Activated T-helper 1 cell treated with anti-CD3 and anti-CD28 coated beads, Interleukin-12 subunit alpha, Interleukin-12 subunit beta, Interleukin-2, Interleukin-4 antibody, amounts not matched to agents 30 ng/mL and 10 ng/mL and 1 ng/mL, durations not matched to agents 14 hours and 24 hours and 36 hours (primary cell): ENCODE measurements at regions of chr18 and their contacts with region 1.

Region 1: DNA sequence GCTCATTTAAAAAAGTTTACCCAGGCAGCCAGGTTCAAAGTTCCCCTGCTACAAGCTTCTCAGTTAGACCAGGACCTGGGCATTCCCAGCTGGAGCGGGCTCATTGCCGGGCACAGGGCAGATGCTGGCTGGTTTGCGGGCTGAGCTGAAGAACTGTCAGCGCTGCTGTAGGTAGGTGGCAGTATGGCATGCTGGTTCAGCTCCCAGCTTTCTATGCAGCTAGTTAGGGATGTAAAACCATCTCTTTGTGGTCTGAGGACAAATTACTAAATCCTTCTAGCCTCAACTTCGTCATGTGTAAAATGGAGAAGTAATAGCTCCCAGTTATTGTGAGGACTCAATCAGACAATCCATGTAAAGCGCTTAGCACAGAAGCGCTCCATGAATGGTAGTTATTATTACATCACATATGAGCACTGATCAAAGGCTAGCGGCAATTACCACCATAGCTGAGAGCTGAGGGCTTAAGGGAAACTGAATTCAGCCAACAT is 2.4 kb upstream of the LDLRAD4 start:
- DNase-seq: peak; percentile 39
- H3K4me3 Mint-ChIP-seq: peak overlapping the region; percentile 87
- H3K27ac Mint-ChIP-seq: peak overlapping the region; percentile 92
- H3K4me1 Mint-ChIP-seq: peaks cover 31% of the 10 kb centered on the region
- H3K27me3 Mint-ChIP-seq: peaks cover 32% of the 10 kb centered on the region

Region 2: DNA sequence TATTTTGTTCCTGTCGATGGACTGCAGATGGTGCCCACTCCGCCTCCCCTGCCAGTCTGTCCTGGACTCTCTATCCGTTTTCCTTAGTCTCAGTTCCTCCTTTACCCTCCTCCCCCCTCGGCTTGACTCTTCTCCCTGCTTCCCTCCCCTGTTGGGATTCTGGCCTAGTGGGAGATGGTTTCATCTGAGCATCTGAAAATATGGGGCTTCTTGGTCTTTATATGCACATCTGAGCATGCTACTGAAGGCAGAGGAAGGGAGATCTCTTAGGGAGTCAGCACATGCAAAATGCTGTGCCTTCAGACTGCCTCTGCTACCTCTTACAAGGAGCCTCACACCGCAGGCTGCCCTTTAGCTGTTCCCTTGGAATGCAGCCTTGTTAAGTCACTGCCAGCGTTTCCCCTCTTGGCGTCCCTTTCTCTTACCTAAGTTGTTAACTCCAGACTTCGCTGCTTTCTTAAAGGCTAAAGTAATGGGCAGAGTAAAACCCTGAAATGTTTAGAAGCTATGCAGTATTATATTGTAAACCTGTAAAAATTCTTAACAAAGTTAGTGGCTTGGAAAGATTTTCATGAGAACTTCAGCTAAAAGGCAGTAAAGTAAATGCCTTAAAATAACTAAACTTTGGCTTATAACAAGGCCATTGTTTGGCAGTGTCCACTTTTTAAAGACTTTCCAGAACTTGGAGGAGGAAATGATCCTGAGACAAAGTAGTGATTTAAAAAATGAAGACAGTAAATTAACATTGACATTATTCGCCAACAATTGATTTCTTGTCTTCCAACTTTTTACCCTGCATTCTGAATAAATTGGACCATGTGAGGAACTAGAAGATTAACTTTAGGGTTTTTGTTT is 52.2 kb after region 1 on chr18:
- intact Hi-C with region 1: loop called (anchors 1 kb)
- DNase-seq: no peak
- H3K4me3 Mint-ChIP-seq: peak overlapping the region; percentile 19
- H3K27ac Mint-ChIP-seq: peak overlapping the region; percentile 74
- H3K4me1 Mint-ChIP-seq: peaks cover 62% of the 10 kb centered on the region
- H3K27me3 Mint-ChIP-seq: peaks cover 7% of the 10 kb centered on the region

Region 3: GRCh38 chr18:13375302-13376255 is 159.4 kb after region 1 on chr18:
- intact Hi-C with region 1: loop called (anchors 1 kb)
- DNase-seq: peak; percentile 80
- H3K4me3 Mint-ChIP-seq: peak overlapping the region; percentile 74
- H3K27ac Mint-ChIP-seq: peak overlapping the region; percentile 95
- H3K4me1 Mint-ChIP-seq: peaks cover 78% of the 10 kb centered on the region
- H3K27me3 Mint-ChIP-seq: peaks cover 4% of the 10 kb centered on the region

Region 4: GRCh38 chr18:13455960-13456471 is 239.9 kb after region 1 on chr18:
- intact Hi-C with region 1: loop called (anchors 1 kb)
- DNase-seq: peak; percentile 35
- H3K4me3 Mint-ChIP-seq: peak overlapping the region; percentile 60
- H3K27ac Mint-ChIP-seq: peak overlapping the region; percentile 66
- H3K4me1 Mint-ChIP-seq: peaks cover 40% of the 10 kb centered on the region
- H3K27me3 Mint-ChIP-seq: peaks cover 4% of the 10 kb centered on the region

Region 5: GRCh38 chr18:13558124-13558523 is 342.0 kb after region 1 on chr18:
- intact Hi-C with region 1: loop called (anchors 2 kb)
- DNase-seq: no peak
- H3K4me3 Mint-ChIP-seq: no peak overlapping the region
- H3K27ac Mint-ChIP-seq: peak overlapping the region; percentile 27
- H3K4me1 Mint-ChIP-seq: peaks cover 34% of the 10 kb centered on the region
- H3K27me3 Mint-ChIP-seq: no peaks in the 10 kb centered on the region

Region 6: DNA sequence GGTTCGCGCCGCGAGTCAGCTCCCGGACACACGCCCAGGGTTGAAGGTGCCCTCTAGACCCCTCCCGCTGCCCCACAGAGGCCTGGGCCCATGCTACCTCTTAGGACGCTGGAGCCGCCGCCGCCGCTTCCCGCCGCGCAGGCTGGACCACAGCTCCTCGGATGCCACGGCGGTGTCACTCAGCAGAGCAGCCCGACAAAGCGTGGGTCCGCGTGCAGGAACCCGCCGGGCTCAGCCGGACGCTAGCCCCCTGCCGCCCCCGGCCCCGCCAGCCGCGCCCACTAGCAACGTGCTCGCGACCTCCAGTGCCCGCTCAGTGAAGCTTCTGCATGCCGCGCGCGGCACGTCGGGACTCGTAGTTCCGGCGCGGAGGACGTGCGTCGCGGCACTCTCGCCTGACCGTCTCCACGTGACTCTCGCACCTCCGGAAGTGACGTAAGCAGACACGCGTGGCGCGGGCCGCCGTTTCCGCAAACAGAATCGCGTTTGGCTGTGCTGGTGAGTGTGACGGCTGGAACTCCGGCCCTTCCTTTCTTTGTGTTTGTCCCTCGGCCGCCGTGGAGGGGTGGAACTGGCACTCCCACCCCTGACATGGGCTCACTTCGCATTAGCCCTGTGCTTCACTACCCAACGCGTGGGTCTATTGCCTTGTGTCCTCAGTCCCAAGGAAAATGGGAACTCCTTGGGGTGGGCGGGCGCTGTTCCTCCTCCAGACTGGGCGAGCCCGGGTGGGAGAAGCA is 510.3 kb after region 1 on chr18 and contains the starts of genes FAM210A and RNMT:
- intact Hi-C with region 1: loop called (anchors 1 kb)
- DNase-seq: peak; percentile 94
- H3K4me3 Mint-ChIP-seq: peak within 1 kb of the TSS; percentile 93
- H3K27ac Mint-ChIP-seq: peak within 1 kb of the TSS; percentile 86
- H3K4me1 Mint-ChIP-seq: peaks cover 72% of the 10 kb centered on the region
- H3K27me3 Mint-ChIP-seq: no peaks in the 10 kb centered on the region
- total RNA-seq, gene FAM210A: 27.7 and 29.5 TPM in 2 replicates
- total RNA-seq, gene RNMT: 55.8 and 60.6 TPM in 2 replicates